ENCODE measurements at regions of chr4 and their contacts with region 1.

Region 1: GRCh38 chr4:114386637-114387233 is 211.9 kb upstream of the UGT8 start:
- DNase-seq: peak; percentile 31 to 38
- H3K4me3 ChIP-seq: no peak overlapping the region
- H3K4me1 ChIP-seq: no peaks in the 10 kb centered on the region
- H3K27me3 ChIP-seq: no peaks in the 10 kb centered on the region

Region 2: GRCh38 chr4:113394730-113395530 is 991.8 kb before region 1 on chr4:
- in situ Hi-C with region 1: loop called (anchors 25 kb)
- DNase-seq: peak; percentile 68 to 71
- H3K4me3 ChIP-seq: no peak overlapping the region
- H3K4me1 ChIP-seq: peaks cover 3% of the 10 kb centered on the region; the same call in 1 of the 2 replicates
- H3K27me3 ChIP-seq: no peaks in the 10 kb centered on the region

Region 3: GRCh38 chr4:113952452-113953029 is 434.2 kb before region 1 on chr4:
- in situ Hi-C with region 1: loop called (anchors 25 kb)
- DNase-seq: peak; percentile 51 to 69
- H3K4me3 ChIP-seq: no peak overlapping the region
- H3K4me1 ChIP-seq: peaks cover 2% of the 10 kb centered on the region; the same call in 1 of the 2 replicates
- H3K27me3 ChIP-seq: no peaks in the 10 kb centered on the region

Region 4: DNA sequence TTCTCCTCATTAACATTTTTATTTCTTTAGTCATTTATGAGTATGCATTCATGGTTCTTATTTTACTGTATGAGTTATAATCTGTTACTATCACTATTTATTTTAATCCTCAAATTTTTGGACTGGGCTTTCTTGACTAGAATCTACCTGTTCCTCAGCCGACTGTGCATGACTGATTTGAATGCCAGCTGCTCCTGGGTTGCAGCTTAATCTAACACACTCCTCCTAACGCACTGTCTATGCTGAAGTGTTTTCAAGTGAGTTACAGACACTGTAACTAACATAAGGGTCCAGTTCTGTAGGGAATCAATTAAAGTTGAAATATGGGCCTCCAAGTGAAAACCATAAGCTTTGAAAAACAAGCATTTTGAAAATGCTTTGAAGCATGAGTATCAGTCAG is 269.9 kb before region 1 on chr4:
- in situ Hi-C with region 1: no loop called
- DNase-seq: no peak
- H3K4me3 ChIP-seq: no peak overlapping the region
- H3K4me1 ChIP-seq: no peaks in the 10 kb centered on the region
- H3K27me3 ChIP-seq: no peaks in the 10 kb centered on the region

Measured in HAP-1 (cell line).